SK-MEL-5 (cell line): ENCODE measurements at regions of chr3 and their contacts with region 1.

Region 1: DNA sequence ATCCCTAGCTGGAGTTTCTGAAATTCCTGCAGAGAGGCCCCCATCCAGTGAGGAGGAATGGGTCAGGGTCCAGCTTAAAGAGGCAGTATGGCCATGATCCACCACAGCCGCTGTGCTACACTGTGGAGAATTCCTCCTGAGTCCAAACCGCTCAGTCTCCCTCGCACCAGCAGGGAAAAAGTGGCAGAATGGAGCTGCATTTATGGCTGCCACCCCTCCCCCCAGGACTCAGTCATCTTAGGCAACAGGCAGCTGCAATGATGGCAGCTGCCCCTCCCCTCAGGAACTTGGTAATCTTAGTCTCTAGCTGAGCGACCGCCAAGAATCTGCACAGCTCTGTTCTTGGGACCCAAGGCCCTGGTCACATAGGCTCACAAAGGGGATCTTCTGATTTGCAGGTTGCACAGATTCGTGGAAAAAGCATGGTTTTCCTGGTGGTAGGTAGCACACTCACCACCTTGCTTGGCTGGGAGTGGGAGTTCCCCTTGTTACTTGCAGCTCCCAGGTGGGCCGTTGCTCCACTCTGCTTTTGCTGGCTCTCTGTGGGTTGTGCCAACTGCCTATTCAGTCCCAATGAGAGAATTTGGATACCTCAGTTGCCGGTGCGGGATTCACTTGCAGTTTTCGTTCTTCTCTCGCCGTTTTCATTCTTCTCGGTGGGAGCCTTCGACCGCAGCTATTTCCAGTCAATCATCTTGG is 204.1 kb downstream of the STXBP5L start:
- DNase-seq: peak; percentile 59

Region 2: GRCh38 chr3:120894303-120894702 is 217.8 kb before region 1 on chr3:
- in situ Hi-C with region 1: loop called (anchors 10 kb)
- DNase-seq: peak; percentile 99